ENCODE measurements at regions of chr2 and their contacts with region 1.

Region 1: GRCh38 chr2:43531251-43531650 is 64.6 kb downstream of the THADA start:
- DNase-seq: no peak
- CTCF ChIP-seq: no peak

Region 2: GRCh38 chr2:43051316-43051715 is 479.9 kb before region 1 on chr2:
- CTCF ChIA-PET with region 1: no interaction called
- POLR2A ChIA-PET with region 1: no interaction called
- DNase-seq: no peak
- CTCF ChIP-seq: no peak

Region 3: GRCh38 chr2:43251171-43251731 is 280.0 kb before region 1 on chr2:
- CTCF ChIA-PET with region 1: no interaction called
- POLR2A ChIA-PET with region 1: no interaction called
- DNase-seq: no peak
- CTCF ChIP-seq: no peak

Region 4: GRCh38 chr2:43508209-43508608 is 23.0 kb before region 1 on chr2:
- CTCF ChIA-PET with region 1: no interaction called
- POLR2A ChIA-PET with region 1: no interaction called
- DNase-seq: no peak
- CTCF ChIP-seq: no peak

Region 5: DNA sequence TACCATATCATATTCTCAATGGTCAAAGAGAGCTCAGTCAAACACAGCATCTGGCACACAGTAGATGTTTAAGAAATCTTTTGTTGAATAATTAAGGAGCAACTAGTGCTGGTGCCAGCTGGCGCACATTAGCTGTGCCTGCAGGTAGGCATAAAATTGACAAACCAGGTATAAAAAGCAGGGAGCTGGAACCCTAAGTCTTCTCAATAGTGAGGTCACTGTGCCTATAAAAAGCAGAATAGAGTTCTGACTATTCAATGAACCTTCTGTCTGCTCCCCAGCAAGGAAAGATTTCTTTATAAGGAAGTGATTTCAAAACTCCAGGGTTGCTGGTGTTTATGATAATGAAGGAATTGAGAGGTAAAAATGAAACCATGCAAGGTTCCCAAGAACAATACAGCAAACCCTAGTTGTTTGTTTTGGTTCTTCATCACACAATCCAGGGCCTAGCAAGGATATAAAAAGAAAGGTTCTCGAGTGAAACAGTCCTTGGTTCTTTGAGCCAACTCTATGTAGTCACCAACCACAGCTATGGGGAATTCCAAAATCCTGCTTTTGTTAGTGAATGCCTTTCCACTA is 11.5 kb before region 1 on chr2:
- CTCF ChIA-PET with region 1: interaction called, 13 read pairs
- POLR2A ChIA-PET with region 1: no interaction called
- DNase-seq: no peak
- CTCF ChIP-seq: no peak

Region 6: GRCh38 chr2:43585708-43586107 is 54.5 kb after region 1 on chr2:
- CTCF ChIA-PET with region 1: no interaction called
- POLR2A ChIA-PET with region 1: no interaction called
- DNase-seq: no peak
- CTCF ChIP-seq: no peak

Measured in GM10248 (cell line).